ENCODE measurements at regions of chr11 and their contacts with region 1.

Region 1: DNA sequence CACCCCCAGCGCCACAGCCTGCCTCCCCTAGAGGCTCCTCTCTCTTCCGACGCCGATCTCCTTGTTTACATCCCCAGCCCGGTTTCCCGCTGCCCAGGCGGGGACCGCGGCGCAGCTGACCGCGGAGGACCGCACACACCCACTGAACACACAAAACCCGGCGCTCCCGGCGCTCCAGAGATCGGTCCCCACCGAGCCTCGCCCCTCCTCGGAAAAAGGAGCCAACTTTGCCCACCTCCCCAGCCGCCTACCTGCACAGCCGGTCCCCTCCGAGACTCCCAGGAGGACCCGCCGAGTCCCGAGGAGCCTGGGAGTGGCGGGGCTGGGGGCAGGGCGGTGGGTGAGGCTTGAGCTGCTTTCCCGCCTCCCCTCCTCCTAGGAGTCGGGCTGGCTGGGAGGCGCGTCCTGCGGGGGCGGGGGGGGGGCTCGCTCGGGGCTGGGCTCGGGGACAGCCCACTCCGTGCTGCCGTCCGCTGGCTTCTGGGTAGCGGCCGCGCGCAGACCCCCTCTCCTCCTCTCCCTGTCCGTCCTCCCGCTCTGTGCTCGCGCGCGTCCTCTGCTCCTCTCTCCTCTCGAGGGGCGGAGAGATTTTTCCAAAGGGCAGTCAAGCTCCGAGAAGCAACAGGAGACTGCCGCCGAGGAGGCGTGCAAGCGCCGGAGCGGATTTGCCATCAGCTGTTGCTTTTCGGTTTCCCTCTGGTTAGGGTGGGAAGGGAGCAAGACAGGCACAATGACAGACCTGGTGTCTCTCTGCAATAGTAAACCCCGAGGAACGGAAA is at the start of gene FXYD6:
- DNase-seq: peak; percentile 71
- ATAC-seq: peak; percentile 56
- H3K4me3 Mint-ChIP-seq: peak within 1 kb of the TSS; percentile 95
- H3K27ac Mint-ChIP-seq: no peak within 1 kb of the TSS
- H3K4me1 Mint-ChIP-seq: peaks cover 36% of the 10 kb centered on the region
- H3K27me3 Mint-ChIP-seq: peaks cover 85% of the 10 kb centered on the region
- CTCF ChIP-seq: no peak
- total RNA-seq, gene FXYD6: 26.2 to 31.6 TPM (median 30.1 TPM) in 3 replicates

Region 2: DNA sequence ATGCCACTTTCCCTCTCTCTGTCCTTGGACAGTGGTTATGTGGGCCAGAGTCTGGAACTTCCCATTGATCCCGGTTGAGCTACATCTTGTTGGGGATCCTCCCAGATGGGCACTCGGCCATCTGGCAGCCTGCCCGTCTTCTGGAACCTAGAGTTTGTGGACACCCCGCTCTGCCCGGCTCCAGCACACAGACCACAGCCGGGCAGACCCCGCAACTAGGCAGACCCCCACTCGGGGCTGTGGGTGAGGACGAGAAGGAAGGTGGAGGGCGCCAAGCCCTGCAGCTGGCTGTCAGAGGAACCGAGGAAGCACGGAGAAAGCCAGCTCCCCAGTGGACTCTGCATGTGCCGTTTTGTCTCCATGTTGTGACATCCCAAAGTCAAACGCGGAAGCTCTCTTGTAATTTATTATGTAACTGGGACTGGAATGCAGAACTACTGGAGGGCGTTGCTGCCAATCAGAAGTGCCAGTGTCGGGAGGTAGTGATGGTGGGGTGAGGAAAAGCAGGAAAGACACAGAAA is 341.2 kb before region 1 on chr11:
- CTCF ChIA-PET with region 1: no interaction called
- POLR2A ChIA-PET with region 1: no interaction called
- DNase-seq: no peak
- ATAC-seq: no peak
- H3K4me3 Mint-ChIP-seq: no peak overlapping the region
- H3K27ac Mint-ChIP-seq: no peak overlapping the region
- H3K4me1 Mint-ChIP-seq: peaks cover 14% of the 10 kb centered on the region
- H3K27me3 Mint-ChIP-seq: no peaks in the 10 kb centered on the region; the same call in 1 of the 2 replicates
- CTCF ChIP-seq: no peak

Region 3: DNA sequence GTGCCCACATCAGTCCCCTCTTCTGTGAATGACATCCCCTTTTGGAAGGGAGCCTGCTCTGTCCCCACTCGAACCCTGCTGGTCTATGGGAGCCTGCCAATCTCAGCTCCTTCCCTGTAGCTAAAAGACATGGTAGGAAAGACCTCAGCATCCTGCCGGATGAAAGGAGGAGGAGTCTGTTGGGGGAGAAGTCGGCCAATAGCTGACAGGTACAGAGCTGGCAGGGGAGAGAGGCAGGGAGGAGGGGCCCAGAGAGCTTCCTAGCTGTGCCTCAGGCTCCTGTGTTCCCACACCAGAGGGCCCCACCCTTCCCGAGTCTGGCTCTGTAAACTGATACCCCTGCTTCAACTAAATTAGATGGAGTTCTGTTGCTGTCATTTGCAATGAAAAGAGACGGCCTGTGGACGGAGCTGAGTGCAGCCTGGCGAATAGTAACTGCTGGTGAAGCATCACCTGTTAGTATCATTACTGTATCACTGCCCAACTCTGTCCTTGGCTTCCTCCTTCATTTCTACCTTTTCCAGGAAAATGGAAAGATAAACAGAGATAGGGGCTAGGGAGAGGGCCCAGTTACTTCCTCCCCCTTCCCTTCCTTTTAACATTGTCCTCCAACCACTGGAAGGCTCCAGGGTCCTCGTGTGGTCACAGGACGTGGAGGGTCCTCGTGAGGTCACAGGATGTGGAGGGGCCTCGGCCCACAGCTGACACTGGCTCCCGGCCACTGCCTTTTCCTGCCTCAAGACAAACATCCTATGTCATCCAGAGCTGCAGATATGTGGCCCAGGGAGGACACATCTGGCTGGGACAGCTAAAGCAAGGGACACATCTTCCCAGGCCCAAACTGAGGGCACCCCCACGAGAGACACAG is 15.1 kb before region 1 on chr11:
- CTCF ChIA-PET with region 1: interaction called, 23 read pairs
- POLR2A ChIA-PET with region 1: interaction called, 6 read pairs
- DNase-seq: peak; percentile 89
- ATAC-seq: peak; percentile 100
- H3K4me3 Mint-ChIP-seq: no peak overlapping the region
- H3K27ac Mint-ChIP-seq: peak overlapping the region; percentile 43
- H3K4me1 Mint-ChIP-seq: peaks cover 25% of the 10 kb centered on the region
- H3K27me3 Mint-ChIP-seq: peaks cover 7% of the 10 kb centered on the region
- CTCF ChIP-seq: no peak

Region 4: GRCh38 chr11:118045191-118045590 is 168.7 kb after region 1 on chr11:
- CTCF ChIA-PET with region 1: no interaction called
- POLR2A ChIA-PET with region 1: no interaction called
- DNase-seq: no peak
- ATAC-seq: no peak
- H3K4me3 Mint-ChIP-seq: no peak overlapping the region
- H3K27ac Mint-ChIP-seq: no peak overlapping the region
- H3K4me1 Mint-ChIP-seq: 0 out of 2 replicates have a peak, but pooled peaks cover 3% of the 10 kb centered on the region
- H3K27me3 Mint-ChIP-seq: no peaks in the 10 kb centered on the region
- CTCF ChIP-seq: no peak